ENCODE measurements at regions of chr6 and their contacts with region 1.

Region 1: DNA sequence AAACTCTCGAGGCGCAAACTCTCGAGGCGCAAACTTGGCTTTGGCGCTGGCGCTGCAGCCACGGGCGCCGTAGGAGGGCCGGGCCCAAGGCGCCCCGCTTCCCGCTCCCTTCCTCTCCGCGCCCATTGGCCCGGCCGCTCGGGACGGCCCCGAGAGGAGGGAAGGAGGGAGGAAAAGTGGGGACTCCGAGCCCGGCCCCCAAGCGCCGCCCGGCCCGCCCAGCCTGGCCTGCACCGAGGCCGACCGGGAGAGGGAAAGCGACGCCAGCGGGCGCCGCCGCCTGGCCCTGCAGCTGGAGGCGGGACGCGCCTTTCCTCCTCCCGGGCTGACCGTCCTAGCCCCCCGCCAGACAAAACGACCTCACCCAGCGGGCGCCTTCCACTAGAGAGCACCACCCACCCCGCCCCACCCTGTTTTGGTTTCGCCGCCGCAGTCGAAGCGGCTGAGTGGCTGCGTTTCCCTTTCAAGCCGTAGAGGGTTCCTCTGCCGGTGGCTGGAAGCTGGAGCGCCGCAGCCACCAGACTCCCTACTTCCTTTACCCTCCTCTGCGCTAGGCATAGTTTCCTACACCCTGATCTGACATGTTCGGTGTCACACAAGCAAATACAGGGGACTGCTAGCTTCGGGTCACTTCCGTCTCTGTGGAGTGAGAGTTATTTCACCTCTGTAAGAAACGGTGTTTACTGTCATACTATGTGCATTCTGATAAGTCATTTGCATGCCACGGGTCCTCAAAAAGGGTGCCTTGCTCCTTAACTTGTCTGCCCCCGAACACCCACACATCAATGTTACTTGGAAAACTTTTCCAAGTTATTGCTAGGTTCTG is at the start of gene MBOAT1:
- DNase-seq: peak; percentile 95
- H3K4me3 ChIP-seq: peak within 1 kb of the TSS; percentile 79 to 90 (median 86)
- H3K27ac ChIP-seq: peak within 1 kb of the TSS; percentile 86 to 93 (median 92)
- H3K4me1 ChIP-seq: peaks cover 43 to 54% (median 46%) of the 10 kb centered on the region in 4 donors
- H3K27me3 ChIP-seq: no peaks in the 10 kb centered on the region
- CTCF ChIP-seq: peak in 2 of 3 experiments; percentile 16 to 24
- EP300 ChIP-seq: no peak
- POLR2A ChIP-seq: no peak
- total RNA-seq, gene MBOAT1: 4.3 to 5.6 (median 4.7) TPM

Region 2: GRCh38 chr6:20126789-20127653 is 85.6 kb before region 1 on chr6:
- intact Hi-C with region 1: loop called (anchors 5 kb)
- DNase-seq: no peak
- H3K4me3 ChIP-seq: no peak overlapping the region
- H3K27ac ChIP-seq: peak overlapping the region; percentile 31 to 55 (median 44)
- H3K4me1 ChIP-seq: peaks cover 15 to 28% (median 17%) of the 10 kb centered on the region in 4 donors
- H3K27me3 ChIP-seq: no peaks in the 10 kb centered on the region
- CTCF ChIP-seq: peak; percentile 86 to 95 (median 90)
- EP300 ChIP-seq: no peak
- POLR2A ChIP-seq: no peak

Region 3: GRCh38 chr6:20173833-20174792 is 38.5 kb before region 1 on chr6:
- intact Hi-C with region 1: loop called (anchors 5 kb)
- DNase-seq: no peak
- H3K4me3 ChIP-seq: no peak overlapping the region
- H3K27ac ChIP-seq: no peak overlapping the region
- H3K4me1 ChIP-seq: peaks cover 10 to 16% (median 13%) of the 10 kb centered on the region in 4 donors
- H3K27me3 ChIP-seq: no peaks in the 10 kb centered on the region
- CTCF ChIP-seq: no peak
- EP300 ChIP-seq: no peak
- POLR2A ChIP-seq: no peak